ENCODE measurements at regions of chr2 and their contacts with region 1.

Region 1: GRCh38 chr2:112187805-112188596 is 49.8 kb downstream of the FBLN7 start:
- DNase-seq: peak in 8 of 9 donors; percentile 69 to 95 (median 88)
- ATAC-seq: peak; percentile 90
- H3K4me3 ChIP-seq: peak overlapping the region; percentile 31
- H3K4me3 Mint-ChIP-seq: peak overlapping the region; percentile 58 to 88 (median 74)
- H3K27ac ChIP-seq: peak overlapping the region; percentile 85
- H3K27ac Mint-ChIP-seq: peak overlapping the region; percentile 92 to 100 (median 99)
- H3K4me1 ChIP-seq: peaks cover 21 to 80% of the 10 kb centered on the region in 2 donors
- H3K4me1 Mint-ChIP-seq: peaks cover 59 to 96% (median 94%) of the 10 kb centered on the region in 7 donors
- H3K27me3 ChIP-seq: no peaks in the 10 kb centered on the region
- H3K27me3 Mint-ChIP-seq: no peaks in the 10 kb centered on the region

Region 2: DNA sequence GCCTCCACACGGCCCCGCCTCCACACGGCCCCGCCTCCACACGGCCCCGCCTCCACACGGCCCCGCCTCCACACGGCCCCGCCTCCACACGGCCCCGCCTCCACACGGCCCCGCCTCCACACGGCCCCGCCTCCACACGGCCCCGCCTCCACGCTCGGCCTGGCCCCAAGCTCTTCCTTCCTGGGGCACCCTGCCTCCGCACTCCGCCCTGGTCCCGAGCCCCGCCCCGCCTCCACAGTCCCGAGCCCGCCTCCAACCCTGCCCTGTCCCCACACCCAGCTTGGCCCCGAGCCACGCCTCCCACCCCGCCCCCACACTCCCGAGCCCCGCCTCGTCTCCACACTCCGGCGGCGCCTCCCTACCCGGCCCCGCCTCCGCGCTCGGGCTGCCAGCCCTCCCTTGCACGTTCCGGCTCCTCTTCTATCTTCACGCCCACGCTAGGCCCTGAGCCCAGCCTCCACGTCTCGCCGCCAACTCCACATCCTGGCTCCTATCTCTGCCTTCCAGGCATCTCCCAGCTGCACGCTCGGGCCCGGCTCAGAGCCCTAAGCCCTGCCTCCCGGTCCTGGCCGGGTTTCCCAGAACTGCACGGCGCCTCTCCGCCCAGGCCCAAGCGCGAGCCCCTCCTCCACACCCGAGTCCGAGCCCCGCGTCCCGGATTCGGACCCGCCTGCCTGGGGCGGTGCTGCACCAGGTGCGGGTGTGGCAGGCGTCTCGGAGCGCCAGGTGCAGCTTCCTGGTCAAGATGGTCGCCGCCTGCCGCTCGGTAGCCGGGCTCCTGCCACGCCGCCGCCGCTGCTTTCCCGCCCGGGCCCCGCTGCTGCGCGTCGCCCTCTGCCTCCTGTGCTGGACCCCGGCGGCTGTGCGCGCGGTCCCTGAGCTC is 132.9 kb before region 1 on chr2 and contains the start of gene TMEM87B:
- CTCF ChIA-PET with region 1: no interaction called
- POLR2A ChIA-PET with region 1: no interaction called
- intact Hi-C with region 1: loop called (anchors 1 to 2 kb)
- DNase-seq: peak; percentile 90 to 98 (median 96)
- ATAC-seq: peak; percentile 80
- H3K4me3 ChIP-seq: peak within 1 kb of the TSS; percentile 85
- H3K4me3 Mint-ChIP-seq: peak within 1 kb of the TSS; percentile 80 to 100 (median 95)
- H3K27ac ChIP-seq: peak within 1 kb of the TSS; percentile 82
- H3K27ac Mint-ChIP-seq: peak within 1 kb of the TSS; percentile 92 to 100 (median 98)
- H3K4me1 ChIP-seq: peaks cover 16 to 19% of the 10 kb centered on the region in 2 donors
- H3K4me1 Mint-ChIP-seq: peaks cover 33 to 48% (median 42%) of the 10 kb centered on the region in 7 donors
- H3K27me3 ChIP-seq: no peaks in the 10 kb centered on the region
- H3K27me3 Mint-ChIP-seq: peaks cover 0 to 2% (median 0%) of the 10 kb centered on the region in 5 donors
- total RNA-seq, gene TMEM87B: 14.0 to 26.9 (median 17.4) TPM

Region 3: GRCh38 chr2:112138159-112138773 is 49.7 kb before region 1 on chr2 and contains the start of gene FBLN7:
- CTCF ChIA-PET with region 1: no interaction called
- POLR2A ChIA-PET with region 1: no interaction called
- intact Hi-C with region 1: loop called in 1 of 2 experiments (anchors 5 kb)
- DNase-seq: peak in 4 of 9 donors; percentile 10 to 22 (median 19)
- ATAC-seq: peak; percentile 18
- H3K4me3 ChIP-seq: peak within 1 kb of the TSS; percentile 63
- H3K4me3 Mint-ChIP-seq: peak within 1 kb of the TSS; percentile 64 to 89 (median 82)
- H3K27ac ChIP-seq: no peak within 1 kb of the TSS
- H3K27ac Mint-ChIP-seq: peak within 1 kb of the TSS in 8 of 9 donors; percentile 21 to 82 (median 57)
- H3K4me1 ChIP-seq: no peaks in the 10 kb centered on the region
- H3K4me1 Mint-ChIP-seq: peaks cover 8 to 18% (median 9%) of the 10 kb centered on the region in 7 donors
- H3K27me3 ChIP-seq: no peaks in the 10 kb centered on the region
- H3K27me3 Mint-ChIP-seq: peaks cover 12 to 37% (median 23%) of the 10 kb centered on the region in 5 donors
- total RNA-seq, gene FBLN7: 12.1 to 36.3 (median 20.5) TPM

Region 4: DNA sequence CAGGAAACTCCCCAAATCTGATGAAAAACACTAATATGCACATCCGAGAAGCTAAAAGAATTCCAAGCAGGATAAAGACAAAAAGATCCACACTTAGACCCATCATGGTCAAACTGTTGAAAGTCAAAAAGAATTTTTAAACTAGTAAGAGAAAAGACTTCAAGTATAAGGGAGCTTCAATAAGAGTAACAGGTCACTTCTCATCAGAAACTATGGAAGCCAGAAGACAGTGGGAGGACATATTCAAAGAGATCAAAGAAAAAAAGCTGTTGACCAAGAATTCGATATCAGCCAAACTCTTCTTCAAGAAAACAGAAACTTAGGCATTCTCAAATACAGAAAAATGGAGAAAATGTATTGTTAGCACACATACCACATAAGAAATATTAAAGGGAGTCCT is 16.4 kb after region 1 on chr2:
- CTCF ChIA-PET with region 1: interaction called, 3 read pairs
- POLR2A ChIA-PET with region 1: interaction called, 5 read pairs
- intact Hi-C with region 1: loop called in 1 of 2 experiments (anchors 1 kb)
- DNase-seq: peak in 1 of 9 donors; percentile 26
- ATAC-seq: no peak
- H3K4me3 ChIP-seq: no peak overlapping the region
- H3K4me3 Mint-ChIP-seq: no peak overlapping the region
- H3K27ac ChIP-seq: no peak overlapping the region
- H3K27ac Mint-ChIP-seq: peak overlapping the region in 2 of 9 donors; percentile 62 to 71
- H3K4me1 ChIP-seq: no peaks in the 10 kb centered on the region
- H3K4me1 Mint-ChIP-seq: peaks cover 2 to 21% (median 9%) of the 10 kb centered on the region in 7 donors
- H3K27me3 ChIP-seq: no peaks in the 10 kb centered on the region
- H3K27me3 Mint-ChIP-seq: no peaks in the 10 kb centered on the region

Region 5: DNA sequence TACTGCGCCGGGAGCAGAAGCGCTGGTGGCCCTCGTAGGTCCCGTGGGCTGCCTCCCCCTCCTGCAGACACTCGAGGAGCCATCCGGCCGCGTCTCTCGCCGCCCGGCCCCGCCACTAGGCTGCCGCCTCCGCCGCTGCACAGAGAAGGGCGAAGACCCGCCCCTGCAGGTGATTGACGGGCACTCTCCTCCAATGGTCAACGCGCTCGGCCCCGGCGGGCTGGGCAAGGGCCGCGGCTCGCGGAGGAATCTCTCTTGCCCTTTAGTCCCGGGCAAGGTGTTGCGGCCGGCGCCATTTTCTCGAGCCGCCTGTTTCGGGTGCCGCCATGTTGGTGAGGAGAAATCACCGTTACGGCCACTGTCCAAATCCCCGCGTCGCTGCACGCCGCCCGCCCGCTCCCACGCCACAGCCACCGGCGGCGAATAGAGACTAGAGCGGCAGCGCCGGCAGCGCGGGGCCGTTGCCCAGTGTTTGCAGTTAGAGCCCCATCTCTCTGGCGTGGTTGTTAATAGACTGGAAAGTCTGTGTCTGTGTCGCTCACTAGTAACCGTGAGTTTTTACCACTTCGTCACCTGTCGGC is 87.4 kb after region 1 on chr2 and contains the start of gene ZC3H6:
- CTCF ChIA-PET with region 1: no interaction called
- POLR2A ChIA-PET with region 1: interaction called, 9 read pairs
- intact Hi-C with region 1: loop called (anchors 1 kb)
- DNase-seq: peak; percentile 96 to 100 (median 100)
- ATAC-seq: peak; percentile 98
- H3K4me3 ChIP-seq: peak within 1 kb of the TSS; percentile 99
- H3K4me3 Mint-ChIP-seq: peak within 1 kb of the TSS; percentile 85 to 95 (median 94)
- H3K27ac ChIP-seq: peak within 1 kb of the TSS; percentile 100
- H3K27ac Mint-ChIP-seq: peak within 1 kb of the TSS; percentile 90 to 99 (median 98)
- H3K4me1 ChIP-seq: peaks cover 14 to 18% of the 10 kb centered on the region in 2 donors
- H3K4me1 Mint-ChIP-seq: peaks cover 9 to 36% (median 25%) of the 10 kb centered on the region in 7 donors
- H3K27me3 ChIP-seq: no peaks in the 10 kb centered on the region
- H3K27me3 Mint-ChIP-seq: peaks cover 0 to 3% (median 0%) of the 10 kb centered on the region in 5 donors
- total RNA-seq, gene ZC3H6: 11.8 to 42.1 (median 23.7) TPM

Measured in naive thymus-derived CD4-positive, alpha-beta T cell (primary cell).